ENCODE measurements at regions of chr19 and their contacts with region 1.

Region 1: GRCh38 chr19:46392243-46392801 is 21.0 kb downstream of the CCDC8 start:
- DNase-seq: peak; percentile 46 to 85 (median 78)
- ATAC-seq: peak; percentile 30
- H3K4me3 ChIP-seq: no peak overlapping the region
- H3K27ac ChIP-seq: peak overlapping the region in 1 of 2 donors; percentile 48
- H3K4me1 ChIP-seq: peaks cover 0 to 8% of the 10 kb centered on the region in 2 donors
- H3K27me3 ChIP-seq: no peaks in the 10 kb centered on the region
- CTCF ChIP-seq: no peak

Region 2: DNA sequence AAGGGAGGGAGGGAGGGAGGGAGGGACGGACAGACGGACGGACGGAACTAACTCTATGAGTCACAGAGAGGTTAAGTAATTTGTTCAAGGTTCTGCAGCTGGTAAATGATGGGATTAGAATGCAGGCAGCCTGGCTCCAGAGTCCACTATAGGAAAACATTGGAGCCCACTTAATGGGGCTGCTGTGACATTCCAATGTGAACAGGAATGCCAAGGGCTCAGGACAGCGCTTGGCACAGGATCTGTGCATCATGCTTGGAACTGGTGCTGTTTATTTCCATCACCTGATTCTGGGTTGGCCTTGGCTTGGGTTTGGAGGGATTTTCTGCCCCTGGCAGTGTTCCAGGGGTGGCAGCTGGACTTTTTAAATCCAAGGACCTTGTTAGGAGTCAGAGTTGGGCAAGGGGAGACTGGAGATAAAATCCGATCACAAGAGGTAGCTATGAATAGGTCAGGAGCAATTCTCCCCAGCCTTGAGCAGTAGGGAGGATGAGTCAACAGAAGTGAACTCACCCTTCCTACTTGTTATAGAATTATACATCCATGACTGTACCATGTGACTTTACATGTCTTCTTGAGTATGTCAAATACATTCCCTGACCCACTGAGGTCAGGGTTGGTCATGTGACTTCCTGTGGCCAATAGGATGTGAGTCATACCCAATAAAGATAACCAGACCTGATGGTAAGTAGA is 103.3 kb before region 1 on chr19:
- intact Hi-C with region 1: loop called in 1 of 2 experiments (anchors 10 kb)
- DNase-seq: no peak
- ATAC-seq: peak; percentile 71
- H3K4me3 ChIP-seq: no peak overlapping the region
- H3K27ac ChIP-seq: peak overlapping the region; percentile 34 to 57
- H3K4me1 ChIP-seq: peaks cover 0 to 9% of the 10 kb centered on the region in 2 donors
- H3K27me3 ChIP-seq: no peaks in the 10 kb centered on the region
- CTCF ChIP-seq: no peak

Region 3: GRCh38 chr19:46616631-46617322 is 224.5 kb after region 1 on chr19:
- intact Hi-C with region 1: no loop called
- DNase-seq: peak in 2 of 4 donors; percentile 59 to 86
- ATAC-seq: peak; percentile 65
- H3K4me3 ChIP-seq: no peak overlapping the region
- H3K27ac ChIP-seq: no peak overlapping the region
- H3K4me1 ChIP-seq: peaks cover 13 to 62% of the 10 kb centered on the region in 2 donors
- H3K27me3 ChIP-seq: no peaks in the 10 kb centered on the region
- CTCF ChIP-seq: no peak